Heart left ventricle (tissue), 16 donors: ENCODE measurements at regions of chr12 and their contacts with region 1.

Region 1: GRCh38 chr12:15706052-15706676 is 83.0 kb downstream of the EPS8 start:
- DNase-seq: no peak
- ATAC-seq: peak in 1 of 4 donors; percentile 41
- H3K4me3 ChIP-seq: no peak overlapping the region
- H3K27ac ChIP-seq: peak overlapping the region in 4 of 12 donors; percentile 8 to 26 (median 24)
- H3K4me1 ChIP-seq: peaks cover 0 to 59% (median 14%) of the 10 kb centered on the region in 12 donors
- H3K27me3 ChIP-seq: no peaks in the 10 kb centered on the region
- CTCF ChIP-seq: no peak
- POLR2A ChIP-seq: no peak

Region 2: GRCh38 chr12:15752785-15753184 is 46.6 kb after region 1 on chr12:
- intact Hi-C with region 1: loop called in 1 of 10 experiments (anchors 5 kb)
- DNase-seq: no peak
- ATAC-seq: no peak
- H3K4me3 ChIP-seq: no peak overlapping the region
- H3K27ac ChIP-seq: no peak overlapping the region
- H3K4me1 ChIP-seq: peaks cover 0 to 32% (median 0%) of the 10 kb centered on the region in 12 donors
- H3K27me3 ChIP-seq: no peaks in the 10 kb centered on the region
- CTCF ChIP-seq: no peak
- POLR2A ChIP-seq: no peak